Right cardiac atrium (tissue), 5 donors: ENCODE measurements at regions of chr18 and their contacts with region 1.

Region 1: DNA sequence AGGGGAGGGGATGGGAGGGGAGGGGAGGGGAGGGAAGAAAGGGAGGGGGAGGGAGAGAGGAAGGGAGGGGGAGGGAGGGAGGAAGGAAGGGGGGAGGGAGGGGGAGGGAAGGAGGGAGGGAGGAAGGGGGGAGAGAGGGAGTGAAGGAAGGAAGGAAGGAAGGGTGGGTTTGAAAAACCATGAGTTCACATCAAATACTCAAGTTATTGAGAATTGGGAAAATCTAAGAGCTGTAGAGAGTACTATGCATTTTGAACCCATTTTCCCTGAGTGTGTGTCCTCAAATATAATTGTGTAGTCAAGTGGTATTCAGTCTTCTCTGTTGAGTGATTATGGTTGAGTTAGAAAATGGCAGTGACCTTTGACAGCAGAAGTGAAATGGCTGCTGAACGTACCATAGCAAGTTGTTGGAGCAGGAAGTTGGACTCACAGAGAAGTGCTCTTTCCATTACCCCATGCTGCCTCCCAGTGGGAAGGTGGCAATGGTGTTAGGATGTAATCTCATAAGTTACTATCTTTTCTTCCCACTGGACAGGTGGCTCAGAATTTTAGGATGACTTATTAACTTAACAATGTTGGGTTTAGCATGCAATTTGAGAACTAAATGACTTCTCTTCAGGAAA is 214.6 kb downstream of the SETBP1 start:
- DNase-seq: peak in 2 of 3 donors; percentile 24 to 62
- ATAC-seq: peak in 1 of 2 donors; percentile 70
- H3K4me3 ChIP-seq: no peak overlapping the region
- H3K27ac ChIP-seq: no peak overlapping the region
- H3K4me1 ChIP-seq: no peaks in the 10 kb centered on the region
- H3K27me3 ChIP-seq: no peaks in the 10 kb centered on the region

Region 2: DNA sequence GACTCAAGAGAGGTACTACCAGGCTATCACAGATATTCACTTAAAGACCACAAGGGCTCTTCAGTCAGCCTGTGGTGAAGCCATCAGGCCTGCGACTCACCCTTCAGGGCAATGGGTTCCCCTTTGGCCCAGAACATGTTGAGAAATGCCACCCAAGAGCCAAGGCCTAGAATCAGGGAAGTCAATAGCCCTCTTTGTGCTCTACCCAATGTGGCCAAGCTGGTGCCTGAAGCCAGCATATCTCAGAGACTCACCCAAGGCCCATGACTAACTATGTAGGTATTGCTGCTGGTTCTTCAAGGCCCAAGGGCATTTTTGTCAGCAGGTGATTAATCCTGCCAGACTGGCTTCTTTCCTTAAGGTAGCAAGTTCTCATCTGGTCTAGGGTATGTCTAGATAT is 553.5 kb before region 1 on chr18:
- intact Hi-C with region 1: loop called in 1 of 4 experiments (anchors 5 kb)
- DNase-seq: no peak
- ATAC-seq: no peak
- H3K4me3 ChIP-seq: no peak overlapping the region
- H3K27ac ChIP-seq: no peak overlapping the region
- H3K4me1 ChIP-seq: no peaks in the 10 kb centered on the region
- H3K27me3 ChIP-seq: no peaks in the 10 kb centered on the region